Left colon (tissue), 2 donors: ENCODE measurements at regions of chr2 and their contacts with region 1.

Region 1: GRCh38 chr2:64330281-64331113 is 123.5 kb upstream of the LGALSL start:
- DNase-seq: peak; percentile 71 to 83
- ATAC-seq: peak; percentile 60

Region 2: DNA sequence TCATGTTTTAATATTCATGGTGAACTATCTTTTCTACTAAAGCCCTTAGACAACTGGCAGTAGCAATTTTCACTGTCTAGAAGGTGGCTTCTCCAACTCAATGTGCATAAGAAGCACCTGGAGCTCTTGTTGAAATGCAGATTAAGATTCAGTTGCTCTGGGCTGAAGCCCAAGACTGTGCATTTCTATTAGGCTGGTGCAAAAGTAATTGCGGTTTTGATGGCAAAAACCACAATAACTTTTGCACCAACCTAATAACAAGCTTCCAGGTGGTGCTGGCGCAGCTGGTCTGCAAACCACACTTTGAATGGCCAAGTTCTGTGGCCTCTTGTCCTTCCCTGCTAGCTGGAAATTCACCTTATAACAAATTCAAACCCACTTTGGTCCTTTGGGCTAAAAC is 284.6 kb before region 1 on chr2:
- intact Hi-C with region 1: loop called in 1 of 2 experiments (anchors 5 kb)
- DNase-seq: no peak
- ATAC-seq: no peak

Region 3: GRCh38 chr2:64478502-64479252 is 148.2 kb after region 1 on chr2:
- intact Hi-C with region 1: loop called in 1 of 2 experiments (anchors 5 kb)
- DNase-seq: no peak
- ATAC-seq: peak; percentile 36

Region 4: GRCh38 chr2:64488050-64488974 is 157.8 kb after region 1 on chr2:
- intact Hi-C with region 1: loop called in 1 of 2 experiments (anchors 5 kb)
- DNase-seq: peak in 1 of 2 donors; percentile 79
- ATAC-seq: peak; percentile 81

Region 5: GRCh38 chr2:64551851-64552250 is 221.4 kb after region 1 on chr2:
- intact Hi-C with region 1: loop called in 1 of 2 experiments (anchors 10 kb)
- DNase-seq: no peak
- ATAC-seq: no peak